ENCODE measurements at regions of chr12 and their contacts with region 1.

Region 1: GRCh38 chr12:124898200-124898922 is 16.1 kb downstream of the UBC start:
- DNase-seq: peak; percentile 62 to 69
- H3K4me3 ChIP-seq: no peak overlapping the region
- H3K27ac ChIP-seq: no peak overlapping the region
- H3K4me1 ChIP-seq: no peaks in the 10 kb centered on the region
- H3K27me3 ChIP-seq: no peaks in the 10 kb centered on the region
- CTCF ChIP-seq: peak; percentile 79

Region 2: DNA sequence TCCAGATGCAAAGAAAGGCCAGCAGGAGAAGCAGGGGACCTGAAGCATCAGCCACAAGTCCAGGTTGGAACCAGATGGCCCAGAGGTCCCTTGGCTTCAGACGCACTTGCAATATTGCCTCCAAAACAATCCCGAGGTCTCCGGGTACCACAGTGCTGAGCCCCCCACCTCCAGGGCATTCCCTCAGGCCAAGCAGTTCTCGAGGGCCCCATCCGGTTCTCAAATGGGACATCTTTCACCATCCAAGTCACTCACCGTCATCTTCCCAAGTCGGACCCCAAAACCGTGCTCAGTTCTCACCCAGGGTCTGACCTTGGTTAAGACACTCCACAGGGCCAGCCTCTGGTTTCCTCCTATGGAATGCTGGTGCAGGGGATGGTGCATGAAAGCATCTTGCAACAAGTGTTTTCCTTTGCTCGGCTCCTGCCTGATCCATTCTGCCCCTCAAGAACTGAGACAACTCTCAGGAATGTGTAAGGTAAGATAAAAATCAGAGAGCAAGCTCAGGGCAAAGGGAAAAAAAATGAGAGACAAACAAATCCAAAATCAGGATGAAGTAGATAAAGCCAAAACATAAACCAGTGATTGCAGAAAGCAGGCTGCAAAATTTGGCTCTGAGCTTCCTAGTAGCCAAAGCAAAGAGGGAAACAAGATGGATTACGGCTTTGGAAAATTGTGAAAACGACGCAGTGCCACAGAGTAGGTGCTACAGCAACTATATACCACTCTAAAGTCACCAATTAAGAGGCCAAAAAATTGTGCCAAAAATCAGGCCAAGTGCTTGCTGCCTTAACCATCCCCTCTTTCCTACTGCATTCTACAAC is 339.0 kb before region 1 on chr12:
- CTCF ChIA-PET with region 1: interaction called, 11 read pairs
- POLR2A ChIA-PET with region 1: no interaction called
- intact Hi-C with region 1: no loop called
- DNase-seq: peak in 1 of 2 experiments; percentile 65
- H3K4me3 ChIP-seq: no peak overlapping the region
- H3K27ac ChIP-seq: no peak overlapping the region
- H3K4me1 ChIP-seq: no peaks in the 10 kb centered on the region
- H3K27me3 ChIP-seq: no peaks in the 10 kb centered on the region
- CTCF ChIP-seq: no peak

Region 3: DNA sequence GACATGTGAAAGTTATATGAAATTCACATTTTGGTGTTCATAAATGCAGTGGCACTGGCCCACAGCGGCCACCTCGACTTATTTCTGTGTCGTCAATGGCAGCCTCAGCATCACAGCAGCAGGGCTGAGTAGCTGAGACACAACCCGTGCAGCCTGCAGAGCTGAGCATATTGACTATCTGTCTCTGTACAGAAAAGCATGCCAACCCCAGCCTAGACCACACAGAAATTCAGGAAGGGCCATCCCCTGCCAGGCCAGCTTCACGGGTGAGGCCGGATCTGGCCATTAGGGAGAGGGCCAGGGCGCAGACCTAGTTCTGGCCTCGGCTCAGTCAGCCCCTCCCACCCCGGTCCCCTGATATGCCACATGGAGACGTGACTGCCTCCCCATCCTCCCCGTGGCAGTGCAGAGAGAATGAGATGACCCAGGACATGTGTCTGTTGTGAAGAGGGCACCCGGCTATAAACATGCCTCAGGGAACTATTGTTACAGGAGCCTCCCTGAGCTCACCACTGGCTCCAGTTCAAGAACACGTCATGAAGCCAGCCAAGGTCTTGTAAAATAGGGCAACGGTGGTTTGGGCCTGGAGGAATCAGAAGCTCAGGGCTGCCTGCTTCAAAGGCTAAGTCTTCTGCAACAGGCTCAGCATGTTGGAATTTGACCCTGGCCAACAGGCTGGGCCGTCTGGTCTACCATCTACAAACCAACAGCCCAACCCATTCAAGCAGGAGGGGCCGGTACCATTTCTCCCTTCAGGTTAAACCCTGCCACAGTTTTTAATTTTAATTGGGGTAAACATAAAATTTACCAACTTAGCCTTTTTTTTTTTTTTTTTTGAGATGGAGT is 60.2 kb before region 1 on chr12:
- CTCF ChIA-PET with region 1: no interaction called
- POLR2A ChIA-PET with region 1: no interaction called
- intact Hi-C with region 1: loop called (anchors 5 kb)
- DNase-seq: peak; percentile 88 to 97
- H3K4me3 ChIP-seq: no peak overlapping the region
- H3K27ac ChIP-seq: peak overlapping the region; percentile 31
- H3K4me1 ChIP-seq: peaks cover 23% of the 10 kb centered on the region
- H3K27me3 ChIP-seq: no peaks in the 10 kb centered on the region
- CTCF ChIP-seq: no peak

Region 4: DNA sequence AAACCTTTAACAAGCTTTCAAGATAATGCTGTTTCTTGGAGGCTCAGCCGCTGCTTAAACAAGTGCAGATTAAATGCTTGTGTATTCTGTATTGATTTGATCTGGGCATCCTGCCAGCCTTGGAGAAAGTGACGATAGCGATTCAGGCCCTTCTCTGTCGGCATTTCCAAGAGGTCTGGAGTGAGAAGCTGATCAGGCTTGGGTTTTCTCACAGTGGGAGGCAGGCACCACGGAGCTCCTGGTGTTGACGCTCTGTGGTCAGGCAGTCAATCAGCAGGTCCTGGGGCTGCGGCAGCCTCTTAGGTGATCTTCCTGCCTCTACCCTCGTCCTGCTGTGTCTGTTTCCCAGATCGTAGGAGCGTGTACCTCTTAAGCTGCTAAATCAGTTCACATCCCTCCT is 322.0 kb after region 1 on chr12:
- CTCF ChIA-PET with region 1: no interaction called
- POLR2A ChIA-PET with region 1: no interaction called
- intact Hi-C with region 1: no loop called
- DNase-seq: no peak
- H3K4me3 ChIP-seq: no peak overlapping the region
- H3K27ac ChIP-seq: no peak overlapping the region
- H3K4me1 ChIP-seq: no peaks in the 10 kb centered on the region
- H3K27me3 ChIP-seq: peaks cover 94% of the 10 kb centered on the region
- CTCF ChIP-seq: no peak